Activated T-helper 1 cell treated with anti-CD3 and anti-CD28 coated beads, Interleukin-12 subunit alpha, Interleukin-12 subunit beta, Interleukin-2, Interleukin-4 antibody, amounts not matched to agents 30 ng/mL and 10 ng/mL and 1 ng/mL, durations not matched to agents 14 hours and 24 hours and 36 hours (primary cell): ENCODE measurements at regions of chr1 and their contacts with region 1.

Region 1: DNA sequence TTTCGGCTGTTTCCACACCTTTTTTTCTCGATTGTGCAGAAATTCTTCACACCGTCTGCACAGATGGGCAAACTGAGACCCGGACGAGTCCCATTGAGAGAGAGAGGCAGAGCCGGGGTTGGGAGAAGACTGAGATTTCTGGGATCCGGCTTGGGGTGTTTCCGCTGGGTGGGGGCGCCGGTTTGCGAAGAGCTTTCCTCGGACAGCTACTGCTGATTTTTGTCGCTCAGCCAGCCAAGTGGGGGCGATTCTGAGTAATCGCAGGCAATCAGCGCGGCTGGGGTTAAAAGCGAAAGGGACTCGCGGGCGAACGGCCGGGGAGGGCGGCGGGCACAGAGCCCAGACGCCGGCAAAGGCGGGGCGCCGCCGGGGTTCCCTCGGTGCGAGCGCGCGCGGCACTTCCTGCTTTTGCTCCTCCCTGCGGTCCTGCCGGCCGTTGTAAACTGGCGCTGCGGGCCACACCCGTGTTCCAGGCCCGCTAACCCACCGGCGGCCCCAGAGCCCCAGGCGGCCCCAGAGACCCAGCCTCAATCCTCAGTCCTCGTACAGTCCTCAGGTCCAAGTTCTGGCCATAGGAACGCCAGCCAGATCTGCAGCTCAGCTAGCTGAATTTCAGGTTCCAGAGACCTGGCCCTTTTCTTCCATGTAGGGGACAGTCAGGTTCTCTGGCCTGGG is 32.4 kb upstream of the JUN start:
- DNase-seq: peak; percentile 83
- H3K4me3 Mint-ChIP-seq: peak overlapping the region; percentile 83
- H3K27ac Mint-ChIP-seq: peak overlapping the region; percentile 86
- H3K4me1 Mint-ChIP-seq: peaks cover 56% of the 10 kb centered on the region
- H3K27me3 Mint-ChIP-seq: peaks cover 2% of the 10 kb centered on the region

Region 2: GRCh38 chr1:57431400-57431799 is 1384.8 kb before region 1 on chr1:
- intact Hi-C with region 1: no loop called
- DNase-seq: no peak
- H3K4me3 Mint-ChIP-seq: no peak overlapping the region
- H3K27ac Mint-ChIP-seq: no peak overlapping the region
- H3K4me1 Mint-ChIP-seq: no peaks in the 10 kb centered on the region
- H3K27me3 Mint-ChIP-seq: no peaks in the 10 kb centered on the region

Region 3: DNA sequence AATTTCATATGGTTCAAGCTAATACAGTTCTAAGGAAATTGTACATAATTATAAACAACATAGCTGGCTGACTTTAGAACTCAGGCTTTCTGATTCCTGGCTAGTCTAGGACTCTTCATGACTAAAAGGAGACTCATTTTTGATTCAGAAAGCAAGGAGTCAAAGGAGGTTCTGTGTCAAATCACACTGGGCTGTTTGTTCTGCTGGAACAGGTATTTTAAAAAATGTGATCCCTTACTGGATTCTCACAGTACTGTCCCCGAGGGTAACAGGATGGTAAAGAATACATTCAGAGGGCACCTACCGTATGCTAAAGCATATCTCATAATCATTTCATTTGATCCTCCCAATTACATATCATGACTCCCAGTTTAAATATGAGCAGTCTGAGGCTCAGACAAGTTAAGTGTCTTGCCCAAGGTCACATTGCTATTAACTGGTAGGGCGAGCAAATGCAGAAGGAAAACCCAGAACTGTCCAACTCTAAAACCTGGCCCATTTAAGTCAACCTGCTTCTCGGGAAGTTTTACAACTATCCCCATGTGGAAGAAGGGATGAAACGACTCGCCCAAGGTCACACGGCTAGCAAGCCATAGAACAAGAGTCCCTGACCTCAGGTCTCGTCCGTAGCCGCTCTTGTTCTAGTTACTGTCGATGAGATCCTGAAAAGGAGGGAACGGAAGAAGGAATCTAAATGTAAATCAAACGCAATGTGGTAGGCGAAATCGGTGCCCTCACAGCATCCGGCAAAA is 117.0 kb before region 1 on chr1:
- intact Hi-C with region 1: loop called (anchors 1 kb)
- DNase-seq: no peak
- H3K4me3 Mint-ChIP-seq: peak overlapping the region; percentile 99
- H3K27ac Mint-ChIP-seq: peak overlapping the region; percentile 98
- H3K4me1 Mint-ChIP-seq: peaks cover 9% of the 10 kb centered on the region
- H3K27me3 Mint-ChIP-seq: no peaks in the 10 kb centered on the region

Region 4: GRCh38 chr1:58829861-58830260 is 13.7 kb after region 1 on chr1:
- intact Hi-C with region 1: no loop called
- DNase-seq: no peak
- H3K4me3 Mint-ChIP-seq: no peak overlapping the region
- H3K27ac Mint-ChIP-seq: peak overlapping the region; percentile 54
- H3K4me1 Mint-ChIP-seq: no peaks in the 10 kb centered on the region
- H3K27me3 Mint-ChIP-seq: peaks cover 5% of the 10 kb centered on the region

Region 5: GRCh38 chr1:58857680-58858673 is 41.8 kb after region 1 on chr1:
- intact Hi-C with region 1: loop called (anchors 1 kb)
- DNase-seq: peak; percentile 43
- H3K4me3 Mint-ChIP-seq: peak overlapping the region; percentile 61
- H3K27ac Mint-ChIP-seq: peak overlapping the region; percentile 95
- H3K4me1 Mint-ChIP-seq: peaks cover 74% of the 10 kb centered on the region
- H3K27me3 Mint-ChIP-seq: no peaks in the 10 kb centered on the region

Region 6: GRCh38 chr1:59020151-59020997 is 204.2 kb after region 1 on chr1:
- intact Hi-C with region 1: loop called (anchors 1 kb)
- DNase-seq: peak; percentile 51
- H3K4me3 Mint-ChIP-seq: peak overlapping the region; percentile 78
- H3K27ac Mint-ChIP-seq: peak overlapping the region; percentile 94
- H3K4me1 Mint-ChIP-seq: peaks cover 68% of the 10 kb centered on the region
- H3K27me3 Mint-ChIP-seq: no peaks in the 10 kb centered on the region

Region 7: DNA sequence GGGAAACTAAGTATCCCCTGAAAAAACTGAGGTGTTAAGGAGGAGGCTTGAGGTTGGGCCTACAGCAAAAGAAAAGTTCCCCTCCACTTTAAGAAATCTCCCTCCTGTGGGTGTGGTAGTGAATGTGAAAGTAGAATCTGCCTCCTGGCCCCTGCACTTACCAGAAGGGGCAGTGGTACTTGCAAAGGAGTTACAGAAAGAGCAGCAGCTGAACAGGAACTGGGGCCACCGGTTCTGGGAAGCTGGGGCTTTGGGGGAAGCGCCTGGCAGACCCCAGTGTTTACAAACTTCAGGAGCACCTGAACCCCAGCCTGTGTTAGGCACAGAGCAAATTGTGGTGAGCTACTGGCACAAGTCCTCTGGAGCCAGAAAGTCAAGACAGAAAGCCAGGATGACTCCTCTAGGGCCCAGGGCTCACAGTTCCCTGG is 230.5 kb after region 1 on chr1:
- intact Hi-C with region 1: loop called (anchors 2 kb)
- DNase-seq: peak; percentile 62
- H3K4me3 Mint-ChIP-seq: peak overlapping the region; percentile 67
- H3K27ac Mint-ChIP-seq: peak overlapping the region; percentile 71
- H3K4me1 Mint-ChIP-seq: peaks cover 77% of the 10 kb centered on the region
- H3K27me3 Mint-ChIP-seq: no peaks in the 10 kb centered on the region

Region 8: GRCh38 chr1:59150577-59151391 is 334.6 kb after region 1 on chr1:
- intact Hi-C with region 1: loop called (anchors 2 kb)
- DNase-seq: peak; percentile 32
- H3K4me3 Mint-ChIP-seq: peak overlapping the region; percentile 2
- H3K27ac Mint-ChIP-seq: peak overlapping the region; percentile 50
- H3K4me1 Mint-ChIP-seq: peaks cover 63% of the 10 kb centered on the region
- H3K27me3 Mint-ChIP-seq: no peaks in the 10 kb centered on the region

Region 9: DNA sequence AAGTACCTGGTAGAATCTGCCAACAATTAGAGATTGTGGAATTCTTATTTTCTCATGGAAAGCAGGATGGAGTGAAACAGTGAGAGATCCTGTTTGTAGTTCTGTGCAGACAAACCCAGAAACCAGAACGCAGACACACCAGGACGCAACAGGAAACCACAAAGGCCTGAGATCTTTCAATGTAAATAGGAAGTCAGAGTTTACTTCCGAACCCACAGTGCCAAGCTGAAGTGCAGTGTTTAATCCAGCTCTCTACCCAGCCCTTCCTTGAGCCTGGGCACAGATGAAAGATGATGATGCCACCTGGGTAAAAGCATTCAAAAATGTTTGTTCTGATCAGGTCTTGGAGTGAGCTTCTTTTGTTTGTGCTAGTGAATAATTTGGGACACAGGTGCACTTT is 754.3 kb after region 1 on chr1:
- intact Hi-C with region 1: loop called (anchors 5 kb)
- DNase-seq: peak; percentile 37
- H3K4me3 Mint-ChIP-seq: peak overlapping the region; percentile 46
- H3K27ac Mint-ChIP-seq: no peak overlapping the region
- H3K4me1 Mint-ChIP-seq: peaks cover 51% of the 10 kb centered on the region
- H3K27me3 Mint-ChIP-seq: peaks cover 12% of the 10 kb centered on the region